ENCODE measurements at regions of chr12 and their contacts with region 1.

Region 1: DNA sequence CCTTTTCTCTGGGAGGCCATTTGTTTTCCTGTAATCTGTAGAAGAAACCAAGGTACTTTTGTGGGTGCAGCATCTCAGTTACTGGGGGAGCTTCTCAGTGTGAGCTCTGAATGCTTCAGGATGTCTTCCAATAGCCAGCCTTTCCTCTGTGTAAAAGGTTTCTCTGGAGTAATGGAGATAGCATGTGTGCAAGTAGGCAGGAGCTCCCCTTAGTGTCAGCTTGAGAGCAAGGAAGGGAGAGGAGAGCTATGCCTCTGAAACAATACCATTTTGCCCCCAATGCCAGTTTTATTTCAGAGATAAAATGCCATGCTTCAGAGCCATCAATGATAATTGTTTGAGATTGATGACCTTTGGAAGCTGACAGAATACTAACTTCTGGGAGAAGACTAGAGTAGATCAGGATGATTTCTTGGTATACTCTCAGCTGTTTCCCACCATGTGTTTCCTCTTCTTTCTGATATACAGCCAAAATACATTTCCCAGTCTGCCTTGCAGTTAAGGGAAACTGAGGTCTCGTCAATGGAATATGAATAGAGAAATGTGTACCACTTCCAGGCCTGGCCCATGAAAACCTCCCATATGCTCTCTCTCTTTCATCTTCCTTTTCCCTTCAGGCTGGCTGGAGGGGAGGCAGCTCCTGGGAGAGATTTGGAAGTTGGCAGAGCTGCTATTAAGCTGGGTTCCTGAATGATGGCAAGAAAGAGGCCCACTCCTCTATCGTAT is 125.7 kb downstream of the CRADD start:
- DNase-seq: no peak
- H3K4me3 Mint-ChIP-seq: no peak overlapping the region
- H3K27ac Mint-ChIP-seq: no peak overlapping the region
- H3K4me1 Mint-ChIP-seq: peaks cover 45% of the 10 kb centered on the region
- H3K27me3 Mint-ChIP-seq: no peaks in the 10 kb centered on the region

Region 2: DNA sequence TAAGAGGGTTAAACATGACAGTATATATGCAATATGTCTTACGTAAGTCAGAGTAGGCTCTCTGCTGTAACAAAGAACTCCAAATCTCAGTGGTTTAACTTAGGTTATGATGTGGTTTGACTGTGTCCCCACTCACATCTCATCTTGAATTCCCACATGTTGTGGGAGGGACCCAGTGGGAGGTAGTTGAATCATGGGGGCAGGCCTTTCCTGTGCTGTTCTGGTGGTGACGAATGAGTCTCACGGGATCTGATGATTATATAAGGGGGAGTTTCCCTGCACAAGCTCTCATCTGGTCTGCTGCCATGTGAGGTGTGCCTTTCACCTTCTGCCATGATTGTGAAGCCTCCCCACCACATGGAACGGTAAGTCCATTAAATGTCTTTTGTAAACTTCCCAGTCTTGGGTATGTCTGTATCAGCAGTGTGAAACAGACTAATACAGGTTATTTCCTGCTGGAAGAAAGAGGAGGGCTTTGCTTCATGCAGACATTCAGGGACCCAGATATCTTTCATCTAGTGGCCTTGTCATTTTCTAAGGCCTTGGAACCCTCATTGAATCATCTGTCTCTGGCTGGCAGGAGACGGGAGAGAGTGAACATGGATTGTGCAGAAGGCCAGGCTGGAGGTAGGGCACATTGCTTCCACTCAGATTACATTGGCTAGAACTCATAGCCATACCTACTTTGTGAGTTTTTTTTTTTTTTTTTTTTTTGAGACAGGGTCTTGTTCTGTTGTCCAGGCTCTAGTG is 29.6 kb before region 1 on chr12:
- CTCF ChIA-PET with region 1: no interaction called
- POLR2A ChIA-PET with region 1: no interaction called
- intact Hi-C with region 1: loop called (anchors 1 kb)
- DNase-seq: peak; percentile 77
- H3K4me3 Mint-ChIP-seq: peak overlapping the region; percentile 45
- H3K27ac Mint-ChIP-seq: peak overlapping the region; percentile 35
- H3K4me1 Mint-ChIP-seq: peaks cover 39% of the 10 kb centered on the region
- H3K27me3 Mint-ChIP-seq: no peaks in the 10 kb centered on the region

Region 3: DNA sequence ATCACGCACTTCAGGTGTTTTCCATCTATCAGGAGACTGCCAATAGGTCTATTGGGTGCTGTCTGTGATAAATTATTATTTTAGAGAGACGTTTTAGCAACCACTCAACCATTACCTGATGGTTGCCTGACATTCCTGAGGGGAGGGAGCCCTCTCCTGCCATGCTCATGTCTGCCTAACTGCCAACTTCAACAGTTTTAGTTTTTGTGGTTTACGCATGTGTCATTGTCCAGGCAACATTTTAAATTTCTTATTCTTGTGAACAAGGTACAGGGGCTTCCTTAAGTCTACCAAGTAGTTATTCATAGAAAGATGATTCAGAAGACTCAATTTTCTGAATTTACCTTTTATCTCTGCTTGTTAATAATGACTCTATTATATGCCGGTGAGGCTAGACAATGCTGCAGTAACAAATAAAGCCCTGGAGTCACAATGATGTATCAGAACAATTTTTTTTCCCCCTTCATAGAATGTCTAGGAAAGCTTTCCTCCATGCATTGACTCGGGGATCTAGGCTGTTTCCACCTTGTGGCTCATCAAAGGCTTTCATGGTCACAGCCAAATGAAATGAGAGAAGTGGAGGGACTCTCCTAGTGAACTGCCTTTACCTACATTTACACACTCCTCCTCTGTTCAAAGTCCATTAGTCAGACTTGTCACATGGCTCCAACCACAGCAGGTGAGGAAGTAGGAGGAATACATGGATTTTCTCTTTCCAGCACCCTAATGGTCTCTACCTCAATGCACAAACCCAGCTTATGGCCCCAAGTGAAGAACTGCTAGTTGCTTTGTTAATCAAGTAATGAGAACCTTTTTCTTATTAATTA is 100.1 kb after region 1 on chr12:
- CTCF ChIA-PET with region 1: no interaction called
- POLR2A ChIA-PET with region 1: no interaction called
- intact Hi-C with region 1: no loop called
- DNase-seq: no peak
- H3K4me3 Mint-ChIP-seq: no peak overlapping the region
- H3K27ac Mint-ChIP-seq: no peak overlapping the region
- H3K4me1 Mint-ChIP-seq: peaks cover 9% of the 10 kb centered on the region
- H3K27me3 Mint-ChIP-seq: no peaks in the 10 kb centered on the region

Measured in activated CD4-positive, alpha-beta memory T cell treated with anti-CD3 and anti-CD28 coated beads for 36 hours (primary cell).